ENCODE measurements at regions of chr17 and their contacts with region 1.

Region 1: DNA sequence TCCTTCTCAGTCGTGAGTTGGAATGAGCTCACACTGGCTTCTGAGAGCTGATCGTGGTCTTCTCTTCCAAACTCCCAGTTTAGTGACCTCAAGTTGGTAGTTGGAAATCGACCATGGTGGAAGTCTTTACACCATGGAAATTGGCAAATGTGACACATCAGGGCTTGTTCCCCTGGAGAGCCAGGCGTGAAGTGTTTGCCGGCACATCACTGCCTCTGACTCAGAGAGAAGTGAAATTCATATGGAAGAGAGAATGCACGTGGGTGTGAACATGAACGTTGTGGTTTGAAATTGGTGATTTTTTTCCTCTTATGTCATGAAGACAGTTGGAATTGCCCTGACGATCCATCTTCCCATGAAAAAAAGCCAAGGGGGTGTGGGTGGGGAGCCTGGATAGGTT is 47.4 kb downstream of the AXIN2 start:
- DNase-seq: no peak
- ATAC-seq: no peak
- H3K4me3 ChIP-seq: no peak overlapping the region
- H3K4me3 Mint-ChIP-seq: no peak overlapping the region
- H3K27ac ChIP-seq: no peak overlapping the region
- H3K27ac Mint-ChIP-seq: no peak overlapping the region
- H3K4me1 ChIP-seq: no peaks in the 10 kb centered on the region
- H3K4me1 Mint-ChIP-seq: peaks cover 0 to 8% (median 0%) of the 10 kb centered on the region in 3 donors
- H3K27me3 ChIP-seq: peaks cover 0 to 13% of the 10 kb centered on the region in 2 experiments
- H3K27me3 Mint-ChIP-seq: peaks cover 0 to 3% of the 10 kb centered on the region in 2 donors

Region 2: GRCh38 chr17:65537845-65538674 is 24.0 kb after region 1 on chr17:
- CTCF ChIA-PET with region 1: no interaction called
- POLR2A ChIA-PET with region 1: no interaction called
- DNase-seq: peak in 28 of 35 experiments; percentile 23 to 65 (median 53)
- ATAC-seq: peak; percentile 66 to 74 (median 74)
- H3K4me3 ChIP-seq: peak overlapping the region in 1 of 2 donors; percentile 42
- H3K4me3 Mint-ChIP-seq: peak overlapping the region; percentile 74 to 78 (median 77)
- H3K27ac ChIP-seq: no peak overlapping the region
- H3K27ac Mint-ChIP-seq: peak overlapping the region; percentile 83 to 87
- H3K4me1 ChIP-seq: peaks cover 19% of the 10 kb centered on the region in 2 experiments
- H3K4me1 Mint-ChIP-seq: peaks cover 32 to 37% (median 35%) of the 10 kb centered on the region in 3 donors
- H3K27me3 ChIP-seq: no peaks in the 10 kb centered on the region
- H3K27me3 Mint-ChIP-seq: no peaks in the 10 kb centered on the region

Region 3: GRCh38 chr17:66724581-66725341 is 1210.7 kb after region 1 on chr17:
- CTCF ChIA-PET with region 1: no interaction called
- POLR2A ChIA-PET with region 1: interaction called in 1 of 2 experiments, 10 read pairs
- DNase-seq: no peak
- ATAC-seq: no peak
- H3K4me3 ChIP-seq: no peak overlapping the region
- H3K4me3 Mint-ChIP-seq: no peak overlapping the region
- H3K27ac ChIP-seq: no peak overlapping the region
- H3K27ac Mint-ChIP-seq: peak overlapping the region in 1 of 2 donors; percentile 5
- H3K4me1 ChIP-seq: peaks cover 0 to 2% of the 10 kb centered on the region in 2 experiments
- H3K4me1 Mint-ChIP-seq: peaks cover 10 to 27% (median 25%) of the 10 kb centered on the region in 3 donors
- H3K27me3 ChIP-seq: no peaks in the 10 kb centered on the region
- H3K27me3 Mint-ChIP-seq: no peaks in the 10 kb centered on the region

Measured in T-cell (primary cell).